ENCODE measurements at regions of chr5 and their contacts with region 1.

Region 1: GRCh38 chr5:92309336-92309991 is 926.3 kb upstream of the ARRDC3 start:
- DNase-seq: peak; percentile 49
- H3K4me3 Mint-ChIP-seq: no peak overlapping the region
- H3K27ac Mint-ChIP-seq: no peak overlapping the region
- H3K4me1 Mint-ChIP-seq: peaks cover 5% of the 10 kb centered on the region
- H3K27me3 Mint-ChIP-seq: no peaks in the 10 kb centered on the region
- CTCF ChIP-seq: peak; percentile 53

Region 2: DNA sequence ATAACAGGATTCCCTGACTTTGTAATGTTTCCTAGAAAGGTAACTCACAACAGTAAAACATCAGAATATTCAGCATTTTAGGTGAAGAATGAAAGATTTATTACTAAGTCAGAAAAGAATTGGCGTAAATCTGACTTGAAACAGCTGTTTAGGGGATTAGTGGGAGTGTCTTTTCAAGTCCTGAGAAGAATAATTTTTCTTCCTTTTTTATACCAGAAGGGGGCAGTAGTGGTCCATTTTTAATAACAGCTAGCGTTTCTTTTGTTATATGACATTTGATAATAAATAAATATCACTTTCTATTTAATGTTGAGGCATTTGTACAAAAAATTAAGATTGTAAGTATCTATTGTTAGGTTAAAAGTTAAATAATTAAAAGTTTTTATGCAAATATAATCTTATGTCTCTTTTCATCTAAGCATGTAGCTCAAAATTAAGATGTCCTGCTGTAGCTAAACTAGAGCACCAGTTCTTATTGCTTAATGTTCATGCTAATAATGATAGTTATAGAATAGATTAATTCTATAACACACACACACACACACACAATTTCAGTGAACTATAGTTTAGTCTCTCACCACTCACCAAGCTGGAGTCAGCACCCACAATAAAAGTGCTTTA is 667.6 kb before region 1 on chr5:
- CTCF ChIA-PET with region 1: interaction called, 4 read pairs
- POLR2A ChIA-PET with region 1: no interaction called
- intact Hi-C with region 1: loop called (anchors 10 kb)
- DNase-seq: peak; percentile 60
- H3K4me3 Mint-ChIP-seq: no peak overlapping the region
- H3K27ac Mint-ChIP-seq: no peak overlapping the region
- H3K4me1 Mint-ChIP-seq: no peaks in the 10 kb centered on the region
- H3K27me3 Mint-ChIP-seq: peaks cover 59% of the 10 kb centered on the region
- CTCF ChIP-seq: peak; percentile 35

Region 3: GRCh38 chr5:91928754-91929521 is 380.5 kb before region 1 on chr5:
- CTCF ChIA-PET with region 1: interaction called, 3 read pairs
- POLR2A ChIA-PET with region 1: no interaction called
- intact Hi-C with region 1: loop called (anchors 10 kb)
- DNase-seq: peak; percentile 11
- H3K4me3 Mint-ChIP-seq: no peak overlapping the region
- H3K27ac Mint-ChIP-seq: no peak overlapping the region
- H3K4me1 Mint-ChIP-seq: no peaks in the 10 kb centered on the region
- H3K27me3 Mint-ChIP-seq: peaks cover 52% of the 10 kb centered on the region
- CTCF ChIP-seq: peak; percentile 31

Region 4: GRCh38 chr5:92552206-92553160 is 243.0 kb after region 1 on chr5:
- CTCF ChIA-PET with region 1: no interaction called
- POLR2A ChIA-PET with region 1: no interaction called
- intact Hi-C with region 1: loop called (anchors 1 kb)
- DNase-seq: peak; percentile 93
- H3K4me3 Mint-ChIP-seq: peak overlapping the region; percentile 61
- H3K27ac Mint-ChIP-seq: peak overlapping the region; percentile 98
- H3K4me1 Mint-ChIP-seq: peaks cover 13% of the 10 kb centered on the region
- H3K27me3 Mint-ChIP-seq: no peaks in the 10 kb centered on the region
- CTCF ChIP-seq: no peak

Region 5: GRCh38 chr5:92838253-92838652 is 528.8 kb after region 1 on chr5:
- CTCF ChIA-PET with region 1: interaction called, 8 read pairs
- POLR2A ChIA-PET with region 1: interaction called, 3 read pairs
- intact Hi-C with region 1: loop called (anchors 1 kb)
- DNase-seq: peak; percentile 62
- H3K4me3 Mint-ChIP-seq: no peak overlapping the region
- H3K27ac Mint-ChIP-seq: no peak overlapping the region
- H3K4me1 Mint-ChIP-seq: peaks cover 15% of the 10 kb centered on the region
- H3K27me3 Mint-ChIP-seq: no peaks in the 10 kb centered on the region
- CTCF ChIP-seq: peak; percentile 8

Region 6: GRCh38 chr5:93062548-93062947 is 753.1 kb after region 1 on chr5:
- CTCF ChIA-PET with region 1: no interaction called
- POLR2A ChIA-PET with region 1: no interaction called
- intact Hi-C with region 1: loop called (anchors 1 kb)
- DNase-seq: peak; percentile 38
- H3K4me3 Mint-ChIP-seq: no peak overlapping the region
- H3K27ac Mint-ChIP-seq: no peak overlapping the region
- H3K4me1 Mint-ChIP-seq: no peaks in the 10 kb centered on the region
- H3K27me3 Mint-ChIP-seq: no peaks in the 10 kb centered on the region
- CTCF ChIP-seq: no peak

Region 7: DNA sequence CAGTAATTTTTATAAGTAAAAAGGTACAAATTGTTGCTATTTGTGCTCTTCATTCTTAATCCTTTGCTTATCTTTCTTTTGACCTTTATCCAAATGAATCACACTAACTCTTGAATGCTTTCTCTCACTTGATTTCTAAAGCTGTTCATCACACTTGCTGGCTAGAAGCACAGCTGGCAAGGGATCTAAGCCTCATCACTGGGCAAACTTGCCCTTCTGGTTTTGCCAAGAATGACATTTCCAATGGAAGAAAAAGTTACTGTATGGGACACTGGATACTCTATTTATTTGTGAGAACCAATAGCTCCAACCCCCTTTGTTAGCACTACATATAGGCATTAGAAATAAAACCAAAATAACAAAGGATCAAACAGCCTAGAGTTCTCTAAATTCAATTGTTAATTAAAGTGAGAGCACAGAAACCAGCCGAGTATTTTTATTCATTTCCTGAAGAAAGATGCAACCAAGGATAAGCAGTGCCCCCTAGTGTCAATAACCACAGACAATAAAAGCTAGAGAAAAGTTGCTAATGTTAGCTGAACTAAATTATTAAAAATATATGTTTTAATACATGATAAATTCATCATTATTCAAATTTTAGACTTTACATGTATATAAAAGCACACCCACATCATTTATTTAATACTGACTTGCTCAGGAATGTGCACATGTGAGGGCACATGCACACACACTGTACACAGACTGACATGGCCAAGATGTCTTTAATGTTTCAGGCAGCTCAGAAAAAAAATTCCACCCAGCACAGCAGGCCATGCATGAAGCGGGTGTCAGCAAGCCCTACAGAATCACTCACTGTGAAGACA is 1491.7 kb after region 1 on chr5:
- CTCF ChIA-PET with region 1: no interaction called
- POLR2A ChIA-PET with region 1: no interaction called
- intact Hi-C with region 1: loop called (anchors 1 kb)
- DNase-seq: peak; percentile 69
- H3K4me3 Mint-ChIP-seq: no peak overlapping the region
- H3K27ac Mint-ChIP-seq: no peak overlapping the region
- H3K4me1 Mint-ChIP-seq: peaks cover 5% of the 10 kb centered on the region
- H3K27me3 Mint-ChIP-seq: no peaks in the 10 kb centered on the region
- CTCF ChIP-seq: peak; percentile 80